H1 (cell line): ENCODE measurements at regions of chr6 and their contacts with region 1.

Region 1: GRCh38 chr6:164927288-164928056 is 381.9 kb downstream of the C6orf118 start:
- DNase-seq: peak; percentile 44 to 87
- H3K4me3 ChIP-seq: no peak overlapping the region
- H3K27ac ChIP-seq: no peak overlapping the region
- H3K4me1 ChIP-seq: no peaks in the 10 kb centered on the region
- H3K27me3 ChIP-seq: no peaks in the 10 kb centered on the region; a peak in 1 of 7 replicates
- CTCF ChIP-seq: peak; percentile 79 to 94 (median 89)
- EP300 ChIP-seq: no peak
- POLR2A ChIP-seq: no peak
- RAD21 ChIP-seq: peak; percentile 98 to 99

Region 2: DNA sequence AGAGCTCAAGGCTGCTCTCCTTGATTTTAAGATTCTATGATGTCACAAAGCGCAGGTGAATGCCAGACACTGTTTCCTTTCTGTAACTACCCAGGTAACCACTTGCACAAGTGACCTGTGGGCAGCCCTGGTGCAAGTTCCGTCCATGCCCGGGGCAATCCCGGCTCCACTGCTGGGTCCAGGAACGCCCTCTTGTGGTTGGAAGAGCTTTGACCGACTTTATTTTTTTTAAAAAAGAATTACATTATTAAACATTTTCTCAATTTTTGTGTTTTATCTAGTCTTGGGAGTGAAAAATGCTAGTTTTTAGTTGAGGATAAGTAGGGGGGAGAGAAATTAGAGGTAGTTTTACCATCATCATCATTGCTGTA is 817.7 kb before region 1 on chr6:
- CTCF ChIA-PET with region 1: interaction called, 11 read pairs
- POLR2A ChIA-PET with region 1: no interaction called
- DNase-seq: peak in 1 of 2 experiments; percentile 61
- H3K4me3 ChIP-seq: no peak overlapping the region
- H3K27ac ChIP-seq: no peak overlapping the region
- H3K4me1 ChIP-seq: no peaks in the 10 kb centered on the region
- H3K27me3 ChIP-seq: no peaks in the 10 kb centered on the region
- CTCF ChIP-seq: peak; percentile 47 to 56 (median 49)
- EP300 ChIP-seq: no peak
- POLR2A ChIP-seq: no peak
- RAD21 ChIP-seq: peak; percentile 71 to 77

Region 3: GRCh38 chr6:164889980-164890379 is 37.5 kb before region 1 on chr6:
- CTCF ChIA-PET with region 1: interaction called, 11 read pairs
- POLR2A ChIA-PET with region 1: no interaction called
- DNase-seq: no peak
- H3K4me3 ChIP-seq: no peak overlapping the region
- H3K27ac ChIP-seq: no peak overlapping the region
- H3K4me1 ChIP-seq: no peaks in the 10 kb centered on the region
- H3K27me3 ChIP-seq: no peaks in the 10 kb centered on the region
- CTCF ChIP-seq: no peak
- EP300 ChIP-seq: no peak
- POLR2A ChIP-seq: no peak
- RAD21 ChIP-seq: no peak

Region 4: DNA sequence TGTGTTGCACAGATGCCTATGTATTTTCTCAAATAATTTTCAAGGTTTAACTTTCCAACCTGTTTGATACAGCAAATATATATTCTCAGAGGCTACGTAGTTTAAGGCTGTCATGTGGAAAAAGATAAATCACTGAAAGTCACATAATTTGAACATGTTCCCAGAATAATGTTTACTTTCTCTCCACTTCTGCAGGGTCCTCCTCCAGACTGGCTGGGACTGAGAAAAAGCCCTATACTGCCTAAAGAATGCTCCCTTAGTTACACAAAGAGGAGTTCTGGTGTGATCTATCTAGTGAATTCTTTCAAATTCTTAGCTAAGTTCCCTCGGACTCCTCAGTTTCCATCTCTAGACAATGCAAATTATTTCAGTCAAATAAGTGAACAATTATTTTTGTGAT is 29.1 kb before region 1 on chr6:
- CTCF ChIA-PET with region 1: interaction called, 17 read pairs
- POLR2A ChIA-PET with region 1: no interaction called
- DNase-seq: no peak
- H3K4me3 ChIP-seq: no peak overlapping the region
- H3K27ac ChIP-seq: no peak overlapping the region
- H3K4me1 ChIP-seq: no peaks in the 10 kb centered on the region
- H3K27me3 ChIP-seq: no peaks in the 10 kb centered on the region
- CTCF ChIP-seq: no peak
- EP300 ChIP-seq: no peak
- POLR2A ChIP-seq: no peak
- RAD21 ChIP-seq: no peak

Region 5: DNA sequence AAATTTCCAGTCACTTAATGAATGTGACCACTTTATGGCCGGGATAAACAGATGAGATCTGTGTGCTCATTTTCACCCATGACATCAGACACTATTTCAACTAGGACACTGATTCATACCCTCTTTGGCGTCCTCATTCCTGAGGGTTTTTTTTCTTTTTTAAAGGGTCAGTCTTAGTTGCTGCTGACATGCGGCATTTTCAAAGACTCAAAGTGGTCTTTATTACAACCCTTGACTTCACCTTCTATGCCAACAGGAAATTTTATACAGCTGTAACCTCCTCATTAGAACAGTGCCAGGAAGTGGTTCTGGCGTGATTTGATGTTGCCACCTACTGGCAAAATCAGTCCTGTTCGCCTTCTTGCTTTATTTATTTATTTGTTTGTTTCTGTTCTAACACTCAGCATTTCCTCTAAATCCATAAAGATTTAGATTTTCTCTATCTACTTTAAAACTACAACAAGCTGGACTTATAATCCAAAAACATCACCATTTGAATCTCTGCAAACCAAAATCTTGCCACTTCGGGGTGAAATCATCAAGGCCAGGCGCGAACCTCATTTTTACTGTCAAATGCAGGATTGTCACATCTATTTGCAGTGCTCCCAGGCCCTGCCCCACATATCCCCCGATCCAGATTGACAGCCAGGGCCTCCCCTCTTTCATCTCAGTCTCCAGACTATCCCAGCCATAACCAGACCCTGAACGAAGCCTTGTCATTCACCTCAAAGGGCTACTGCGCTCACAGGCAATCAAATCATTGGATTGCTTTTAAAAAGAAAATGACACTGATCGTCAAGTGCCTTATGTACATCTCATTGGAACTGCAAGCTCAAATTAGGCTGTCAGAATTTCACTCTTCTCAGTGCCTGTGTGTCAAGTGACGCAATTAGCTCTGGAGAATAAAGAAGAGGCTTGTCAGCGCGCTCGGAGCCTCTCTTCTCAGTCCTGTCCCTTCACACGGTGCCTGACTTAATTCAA is 304.4 kb after region 1 on chr6:
- CTCF ChIA-PET with region 1: interaction called, 13 read pairs
- POLR2A ChIA-PET with region 1: no interaction called
- DNase-seq: no peak
- H3K4me3 ChIP-seq: no peak overlapping the region
- H3K27ac ChIP-seq: no peak overlapping the region
- H3K4me1 ChIP-seq: no peaks in the 10 kb centered on the region
- H3K27me3 ChIP-seq: no peaks in the 10 kb centered on the region
- CTCF ChIP-seq: peak in 2 of 3 experiments; percentile 64 to 68; a peak in 3 of 4 replicates
- EP300 ChIP-seq: no peak
- POLR2A ChIP-seq: no peak
- RAD21 ChIP-seq: peak; percentile 82 to 83